Activated T-helper 1 cell treated with anti-CD3 and anti-CD28 coated beads, Interleukin-12 subunit alpha, Interleukin-12 subunit beta, Interleukin-2, Interleukin-4 antibody, amounts not matched to agents 30 ng/mL and 10 ng/mL and 1 ng/mL, durations not matched to agents 14 hours and 24 hours and 36 hours (primary cell): ENCODE measurements at regions of chr1 and their contacts with region 1.

Region 1: GRCh38 chr1:151611832-151612500 is at the start of gene SNX27:
- DNase-seq: peak; percentile 80
- H3K4me3 Mint-ChIP-seq: peak within 1 kb of the TSS; percentile 99
- H3K27ac Mint-ChIP-seq: peak within 1 kb of the TSS; percentile 95
- H3K4me1 Mint-ChIP-seq: peaks cover 38% of the 10 kb centered on the region
- H3K27me3 Mint-ChIP-seq: peaks cover 5% of the 10 kb centered on the region
- total RNA-seq, gene SNX27: 31.1 and 31.9 TPM in 2 replicates

Region 2: DNA sequence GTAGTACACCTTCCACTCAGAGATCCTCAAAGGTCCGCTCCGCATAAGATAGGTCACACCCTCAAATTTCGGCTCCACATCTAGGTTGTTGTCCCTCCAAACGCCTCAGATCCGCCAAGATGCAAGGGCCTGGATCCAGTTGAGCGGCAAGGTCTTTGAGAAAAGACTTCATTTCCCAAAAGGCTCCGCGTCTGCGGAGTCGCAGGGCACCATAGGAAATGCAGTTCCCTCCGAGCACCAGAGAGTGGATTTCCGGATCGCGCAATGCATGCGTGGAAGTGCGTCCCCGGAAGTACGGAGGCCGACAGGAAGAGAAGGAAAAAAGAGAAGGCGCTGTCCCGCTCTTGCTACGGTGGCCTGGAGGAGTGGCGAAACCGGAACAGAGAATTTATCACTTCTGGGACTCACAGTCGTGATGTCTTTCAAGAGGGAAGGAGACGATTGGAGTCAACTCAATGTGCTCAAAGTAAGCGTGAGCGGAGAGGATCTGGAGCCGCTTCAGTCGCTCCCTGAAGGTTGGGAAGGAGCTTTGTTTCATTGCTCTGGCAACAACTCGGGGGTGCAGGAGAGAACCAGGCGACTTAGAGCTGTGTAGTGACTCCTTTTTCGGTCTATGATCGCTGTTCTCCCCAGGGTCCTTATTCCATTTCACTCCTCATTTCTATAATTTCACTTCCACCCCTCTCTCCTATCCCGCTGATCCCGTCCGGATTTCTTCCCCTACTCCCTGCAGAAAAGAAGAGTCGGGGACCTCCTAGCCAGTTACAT is 446.0 kb before region 1 on chr1 and contains the starts of genes LYSMD1 and SCNM1:
- intact Hi-C with region 1: loop called (anchors 5 kb)
- DNase-seq: peak; percentile 96
- H3K4me3 Mint-ChIP-seq: peak within 1 kb of the TSS; percentile 95
- H3K27ac Mint-ChIP-seq: peak within 1 kb of the TSS; percentile 97
- H3K4me1 Mint-ChIP-seq: peaks cover 53% of the 10 kb centered on the region
- H3K27me3 Mint-ChIP-seq: peaks cover 2% of the 10 kb centered on the region
- total RNA-seq, gene LYSMD1: 4.0 and 5.0 TPM in 2 replicates
- total RNA-seq, gene SCNM1: 111 and 117 TPM in 2 replicates

Region 3: DNA sequence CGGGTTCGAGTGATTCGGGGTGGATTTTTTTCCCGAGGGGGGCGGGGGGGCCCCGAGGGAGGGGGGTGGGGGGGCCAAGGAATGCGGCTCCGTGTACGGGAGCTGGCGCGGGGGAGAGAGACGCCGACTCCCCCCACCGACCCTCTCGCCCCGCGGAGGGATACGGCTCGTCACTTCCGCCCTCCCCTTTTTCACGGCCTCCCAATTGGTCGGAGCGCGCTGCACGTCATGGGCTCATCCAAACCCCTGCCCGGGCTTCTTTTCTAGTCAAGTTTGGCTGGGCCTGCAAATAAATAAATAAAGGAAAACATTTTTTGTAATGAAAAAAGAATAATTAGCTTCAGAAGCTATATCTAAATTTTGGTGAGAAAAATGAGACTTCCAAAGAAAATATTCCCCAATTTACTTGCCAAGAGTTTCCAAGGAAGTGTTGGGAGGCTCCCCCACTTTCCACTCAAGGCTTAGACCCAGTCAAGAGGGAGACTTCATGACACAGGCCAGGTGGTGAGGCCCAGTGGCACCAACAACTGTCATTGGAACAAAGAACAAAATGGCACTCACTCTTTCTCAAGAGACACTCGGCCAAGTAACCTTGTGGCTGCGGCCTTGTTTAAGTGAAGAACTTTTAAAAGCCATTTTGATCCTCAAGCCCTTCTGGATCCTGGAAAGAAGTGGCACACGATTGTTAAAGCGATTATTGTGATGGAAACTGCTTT is 152.5 kb before region 1 on chr1 and contains the start of gene POGZ:
- intact Hi-C with region 1: loop called (anchors 5 kb)
- DNase-seq: peak; percentile 88
- H3K4me3 Mint-ChIP-seq: peak within 1 kb of the TSS; percentile 90
- H3K27ac Mint-ChIP-seq: peak within 1 kb of the TSS; percentile 97
- H3K4me1 Mint-ChIP-seq: peaks cover 21% of the 10 kb centered on the region
- H3K27me3 Mint-ChIP-seq: peaks cover 13% of the 10 kb centered on the region
- total RNA-seq, gene POGZ: 89.1 and 91.1 TPM in 2 replicates

Region 4: DNA sequence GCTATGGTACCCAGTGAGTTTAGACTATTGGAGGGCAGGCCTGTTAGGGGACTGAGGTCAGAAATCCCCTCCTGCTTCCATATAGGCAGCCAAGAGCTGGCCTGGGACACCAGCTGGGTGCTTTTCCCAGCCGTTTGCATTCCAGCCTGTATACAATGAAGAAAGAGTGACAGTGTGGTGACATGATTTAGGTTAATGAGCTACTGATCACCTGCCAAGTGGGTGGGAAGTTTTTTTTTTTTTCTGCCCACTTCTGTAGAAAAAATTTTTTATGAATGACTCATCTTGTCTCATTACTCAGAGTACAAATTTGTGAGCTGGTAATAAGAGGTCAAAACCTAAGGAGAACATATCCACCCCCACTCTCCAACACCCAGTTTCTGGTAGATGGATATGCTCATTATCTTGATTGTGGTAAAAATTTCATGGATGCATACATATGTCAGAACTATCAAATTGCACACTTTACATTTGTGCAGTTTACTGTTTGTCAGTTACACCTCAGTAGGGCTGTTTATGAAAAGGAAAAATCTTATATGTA is 117.2 kb before region 1 on chr1:
- intact Hi-C with region 1: no loop called
- DNase-seq: no peak
- H3K4me3 Mint-ChIP-seq: no peak overlapping the region
- H3K27ac Mint-ChIP-seq: no peak overlapping the region
- H3K4me1 Mint-ChIP-seq: peaks cover 12% of the 10 kb centered on the region
- H3K27me3 Mint-ChIP-seq: peaks cover 13% of the 10 kb centered on the region

Region 5: GRCh38 chr1:151594143-151594625 is 17.8 kb before region 1 on chr1:
- intact Hi-C with region 1: loop called (anchors 1 kb)
- DNase-seq: peak; percentile 75
- H3K4me3 Mint-ChIP-seq: peak overlapping the region; percentile 52
- H3K27ac Mint-ChIP-seq: no peak overlapping the region
- H3K4me1 Mint-ChIP-seq: peaks cover 12% of the 10 kb centered on the region
- H3K27me3 Mint-ChIP-seq: peaks cover 8% of the 10 kb centered on the region

Region 6: GRCh38 chr1:151762941-151763921 is 151.3 kb after region 1 on chr1 and contains the start of gene MRPL9:
- intact Hi-C with region 1: loop called (anchors 1 kb)
- DNase-seq: peak; percentile 84
- H3K4me3 Mint-ChIP-seq: peak within 1 kb of the TSS; percentile 89
- H3K27ac Mint-ChIP-seq: peak within 1 kb of the TSS; percentile 96
- H3K4me1 Mint-ChIP-seq: peaks cover 35% of the 10 kb centered on the region
- H3K27me3 Mint-ChIP-seq: no peaks in the 10 kb centered on the region
- total RNA-seq, gene MRPL9: 136 and 141 TPM in 2 replicates

Region 7: DNA sequence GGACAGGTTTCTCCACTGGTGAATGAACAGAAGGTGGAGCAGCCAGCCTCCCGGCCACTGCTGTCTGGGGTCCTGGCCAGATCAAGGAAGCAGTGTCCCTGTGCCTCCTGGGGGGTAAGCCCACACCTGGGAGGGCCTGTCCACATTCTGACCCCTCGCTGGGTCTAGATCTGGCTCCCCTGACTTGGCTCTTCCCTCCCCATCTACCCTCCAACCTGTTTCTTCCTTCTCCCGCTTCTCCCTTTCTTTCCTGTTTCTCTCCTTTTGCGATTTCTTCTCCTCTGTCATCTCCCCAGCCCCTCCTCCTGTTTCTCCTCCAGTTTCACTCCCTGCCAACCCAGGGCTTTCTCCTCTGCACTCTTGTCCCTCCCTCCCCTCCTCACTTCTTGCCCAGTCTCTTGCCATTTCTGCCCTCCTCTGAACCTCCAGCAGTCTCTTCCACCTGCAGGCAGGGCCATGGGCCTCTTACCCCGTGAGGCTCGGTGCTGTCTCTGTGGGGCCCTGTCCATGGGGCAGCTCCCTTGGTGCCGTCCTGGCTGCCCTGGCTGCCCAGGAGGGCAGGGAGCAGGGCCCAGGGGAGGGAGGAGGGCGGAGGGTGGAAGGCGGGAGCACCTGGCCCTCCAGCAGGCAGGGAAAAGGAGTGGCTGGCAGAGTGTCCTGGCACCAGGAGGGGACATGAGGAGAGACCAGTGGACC is 219.4 kb after region 1 on chr1 and contains the start of gene RORC:
- intact Hi-C with region 1: loop called (anchors 1 kb)
- DNase-seq: no peak
- H3K4me3 Mint-ChIP-seq: peak within 1 kb of the TSS; percentile 24
- H3K27ac Mint-ChIP-seq: peak within 1 kb of the TSS; percentile 36
- H3K4me1 Mint-ChIP-seq: peaks cover 71% of the 10 kb centered on the region
- H3K27me3 Mint-ChIP-seq: no peaks in the 10 kb centered on the region
- total RNA-seq, gene RORC: 2.6 and 2.7 TPM in 2 replicates

Region 8: DNA sequence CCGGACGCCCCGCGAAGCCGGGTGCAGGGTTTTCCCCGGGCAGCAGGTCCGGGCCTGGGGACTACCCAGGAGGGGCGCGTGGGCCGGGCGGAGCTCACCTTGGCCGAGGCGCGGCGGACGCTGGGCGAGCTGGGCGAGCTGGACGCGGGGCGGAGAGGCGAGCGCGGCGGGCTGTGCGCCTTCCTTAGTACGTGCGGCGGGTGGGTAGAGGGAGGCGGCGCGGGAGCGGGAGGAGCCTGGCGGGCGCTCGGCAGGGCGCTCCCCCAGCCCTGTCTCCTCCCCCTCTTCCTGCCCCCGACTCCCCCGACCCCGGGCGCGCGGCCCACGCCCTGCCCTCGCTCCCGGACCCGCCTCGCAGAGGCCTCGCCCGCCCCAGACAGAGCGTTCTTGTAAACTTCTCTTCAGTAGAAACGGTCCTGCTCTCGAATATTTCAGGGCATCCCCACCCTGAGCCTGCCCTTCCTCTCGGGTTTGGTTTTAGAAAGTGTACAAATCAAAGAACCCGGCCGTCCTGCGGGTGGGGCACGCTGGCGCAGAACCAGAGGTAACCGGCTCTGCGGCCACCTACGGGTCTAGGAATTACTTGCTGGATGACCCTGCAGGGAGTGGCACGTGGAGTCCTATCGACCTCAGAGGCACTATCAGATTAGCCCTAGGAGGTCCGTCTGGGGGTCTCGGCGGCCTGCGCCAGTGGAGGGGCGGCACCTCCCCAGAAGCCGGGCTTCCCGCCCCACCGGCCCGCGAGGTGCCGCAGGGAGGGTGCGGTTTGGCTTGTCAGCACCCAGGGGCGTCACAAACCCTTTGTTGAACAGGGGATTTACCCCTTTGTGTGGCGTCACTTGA is 381.9 kb after region 1 on chr1 and contains the start of gene S100A10:
- intact Hi-C with region 1: loop called (anchors 10 kb)
- DNase-seq: peak; percentile 77
- H3K4me3 Mint-ChIP-seq: peak within 1 kb of the TSS; percentile 98
- H3K27ac Mint-ChIP-seq: peak within 1 kb of the TSS; percentile 98
- H3K4me1 Mint-ChIP-seq: peaks cover 49% of the 10 kb centered on the region
- H3K27me3 Mint-ChIP-seq: peaks cover 1% of the 10 kb centered on the region
- total RNA-seq, gene S100A10: 105 and 106 TPM in 2 replicates